OCI-LY7 (cell line): ENCODE measurements at regions of chr19 and their contacts with region 1.

Region 1: DNA sequence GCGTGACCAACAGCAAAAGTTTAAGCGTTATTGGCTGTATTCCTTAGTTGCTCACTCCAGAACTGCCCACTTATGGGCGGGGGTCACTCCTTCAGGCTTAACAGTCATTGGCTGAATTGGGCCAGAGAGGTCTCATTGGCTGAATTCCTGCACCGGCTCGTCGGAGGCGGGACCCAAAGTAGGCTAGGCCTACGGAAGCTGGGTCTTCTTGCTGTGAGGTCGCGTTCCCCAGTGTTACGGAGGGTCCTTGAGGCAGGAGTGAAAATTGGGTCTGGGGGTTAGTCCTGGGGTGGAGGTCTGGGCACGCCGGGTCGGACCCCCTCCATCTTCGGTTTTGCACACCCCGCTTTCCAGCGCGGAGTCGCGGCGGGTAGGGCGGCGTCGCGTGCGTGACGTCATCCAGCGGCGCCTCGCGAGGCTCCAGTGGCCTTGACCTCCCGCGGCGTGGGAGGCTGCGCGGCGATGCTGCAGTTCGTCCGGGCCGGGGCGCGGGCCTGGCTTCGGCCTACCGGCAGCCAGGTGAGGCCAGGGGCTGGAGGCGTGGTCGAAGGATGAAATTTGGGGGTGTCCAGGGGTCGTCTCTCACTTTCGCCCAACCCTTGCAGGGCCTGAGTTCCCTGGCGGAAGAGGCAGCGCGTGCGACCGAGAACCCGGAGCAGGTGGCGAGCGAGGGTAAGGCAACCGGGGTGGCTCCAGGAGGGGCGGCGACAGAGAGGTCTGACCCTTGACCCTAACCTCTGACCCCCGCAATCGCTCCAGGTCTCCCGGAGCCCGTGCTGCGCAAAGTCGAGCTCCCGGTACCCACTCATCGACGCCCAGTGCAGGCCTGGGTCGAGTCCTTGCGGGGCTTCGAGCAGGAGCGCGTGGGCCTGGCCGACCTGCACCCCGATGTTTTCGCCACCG is at the start of gene MRPL4:
- DNase-seq: peak; percentile 99
- H3K4me3 ChIP-seq: peak within 1 kb of the TSS; percentile 97
- H3K27ac ChIP-seq: peak within 1 kb of the TSS; percentile 54
- H3K4me1 ChIP-seq: peaks cover 48% of the 10 kb centered on the region
- CTCF ChIP-seq: no peak
- total RNA-seq, gene MRPL4: 134 and 148 TPM in 2 replicates

Region 2: DNA sequence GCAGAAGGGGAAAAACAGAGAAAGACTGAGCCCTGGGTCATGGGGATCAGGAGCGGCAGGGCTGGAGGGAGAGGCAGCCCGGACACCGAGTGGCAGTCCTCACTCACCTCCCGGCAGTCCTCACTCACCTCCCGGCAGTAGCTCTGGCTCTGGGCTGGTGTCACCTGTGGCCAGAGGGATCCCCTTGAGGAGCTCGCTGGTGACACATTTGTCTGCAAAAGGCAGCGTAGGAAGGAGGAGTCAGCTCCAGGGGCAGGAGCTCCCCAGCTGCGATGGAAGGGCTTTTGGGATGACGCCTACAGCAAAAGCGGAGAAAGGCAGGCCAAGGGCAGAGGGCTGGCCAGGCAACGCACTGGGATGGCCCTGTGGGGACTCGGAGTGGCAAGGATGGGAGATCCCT is 133.1 kb before region 1 on chr19:
- CTCF ChIA-PET with region 1: no interaction called
- POLR2A ChIA-PET with region 1: no interaction called
- intact Hi-C with region 1: loop called (anchors 1 kb)
- DNase-seq: no peak
- H3K4me3 ChIP-seq: peak overlapping the region; percentile 91
- H3K27ac ChIP-seq: peak overlapping the region; percentile 50
- H3K4me1 ChIP-seq: peaks cover 6% of the 10 kb centered on the region
- CTCF ChIP-seq: no peak

Region 3: GRCh38 chr19:10173257-10173926 is 78.7 kb before region 1 on chr19:
- CTCF ChIA-PET with region 1: no interaction called
- POLR2A ChIA-PET with region 1: interaction called, 3 read pairs
- intact Hi-C with region 1: loop called (anchors 2 kb)
- DNase-seq: no peak
- H3K4me3 ChIP-seq: no peak overlapping the region
- H3K27ac ChIP-seq: no peak overlapping the region
- H3K4me1 ChIP-seq: peaks cover 32% of the 10 kb centered on the region
- CTCF ChIP-seq: no peak

Region 4: DNA sequence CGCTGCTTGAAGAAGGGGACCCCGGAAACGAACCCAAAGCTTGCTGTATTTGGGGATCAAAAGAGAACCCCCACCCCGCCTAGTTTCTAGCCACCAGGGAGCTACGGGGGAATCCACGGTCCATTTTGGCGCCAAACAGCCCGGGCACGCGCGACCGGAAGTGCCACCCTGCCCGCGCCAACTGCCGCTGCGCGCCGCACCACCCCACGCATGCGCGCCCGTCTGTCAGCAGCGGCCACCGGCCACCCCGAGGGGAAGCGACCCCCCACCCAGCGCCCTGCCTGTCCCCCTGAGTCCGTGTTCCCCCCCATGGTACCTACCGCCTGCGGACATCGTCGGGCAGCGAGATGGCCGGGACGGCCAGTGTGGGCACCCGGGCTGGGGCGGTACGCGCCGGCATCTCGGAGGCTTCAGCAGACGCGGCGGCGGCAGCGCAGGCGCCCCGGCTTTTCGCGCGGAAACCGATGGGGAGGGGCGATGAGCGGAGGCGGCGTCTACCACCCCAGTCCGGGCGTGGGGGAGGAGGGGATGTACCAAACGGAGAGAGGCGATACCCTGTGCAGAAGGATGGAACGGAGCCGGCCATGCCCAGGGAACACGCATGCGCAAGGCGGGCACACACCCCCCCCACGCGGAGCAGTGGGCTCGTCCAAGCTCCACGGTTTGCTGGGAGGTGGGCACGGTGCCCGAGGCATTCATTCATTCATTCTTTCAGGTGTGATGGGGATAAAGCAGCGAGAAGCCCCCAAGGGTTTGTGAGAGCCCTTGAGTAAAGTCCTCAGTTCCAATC is 57.3 kb before region 1 on chr19 and contains the start of gene DNMT1:
- CTCF ChIA-PET with region 1: interaction called, 3 read pairs
- POLR2A ChIA-PET with region 1: interaction called, 3 read pairs
- intact Hi-C with region 1: loop called (anchors 2 kb)
- DNase-seq: peak; percentile 98
- H3K4me3 ChIP-seq: peak within 1 kb of the TSS; percentile 92
- H3K27ac ChIP-seq: peak within 1 kb of the TSS; percentile 78
- H3K4me1 ChIP-seq: peaks cover 80% of the 10 kb centered on the region
- CTCF ChIP-seq: no peak
- total RNA-seq, gene DNMT1: 329 and 365 TPM in 2 replicates

Region 5: GRCh38 chr19:10219678-10220077 is 32.4 kb before region 1 on chr19:
- CTCF ChIA-PET with region 1: interaction called, 4 read pairs
- POLR2A ChIA-PET with region 1: interaction called, 3 read pairs
- intact Hi-C with region 1: loop called (anchors 5 kb)
- DNase-seq: peak; percentile 84
- H3K4me3 ChIP-seq: peak overlapping the region; percentile 54
- H3K27ac ChIP-seq: peak overlapping the region; percentile 93
- H3K4me1 ChIP-seq: peaks cover 63% of the 10 kb centered on the region
- CTCF ChIP-seq: peak; percentile 83

Region 6: DNA sequence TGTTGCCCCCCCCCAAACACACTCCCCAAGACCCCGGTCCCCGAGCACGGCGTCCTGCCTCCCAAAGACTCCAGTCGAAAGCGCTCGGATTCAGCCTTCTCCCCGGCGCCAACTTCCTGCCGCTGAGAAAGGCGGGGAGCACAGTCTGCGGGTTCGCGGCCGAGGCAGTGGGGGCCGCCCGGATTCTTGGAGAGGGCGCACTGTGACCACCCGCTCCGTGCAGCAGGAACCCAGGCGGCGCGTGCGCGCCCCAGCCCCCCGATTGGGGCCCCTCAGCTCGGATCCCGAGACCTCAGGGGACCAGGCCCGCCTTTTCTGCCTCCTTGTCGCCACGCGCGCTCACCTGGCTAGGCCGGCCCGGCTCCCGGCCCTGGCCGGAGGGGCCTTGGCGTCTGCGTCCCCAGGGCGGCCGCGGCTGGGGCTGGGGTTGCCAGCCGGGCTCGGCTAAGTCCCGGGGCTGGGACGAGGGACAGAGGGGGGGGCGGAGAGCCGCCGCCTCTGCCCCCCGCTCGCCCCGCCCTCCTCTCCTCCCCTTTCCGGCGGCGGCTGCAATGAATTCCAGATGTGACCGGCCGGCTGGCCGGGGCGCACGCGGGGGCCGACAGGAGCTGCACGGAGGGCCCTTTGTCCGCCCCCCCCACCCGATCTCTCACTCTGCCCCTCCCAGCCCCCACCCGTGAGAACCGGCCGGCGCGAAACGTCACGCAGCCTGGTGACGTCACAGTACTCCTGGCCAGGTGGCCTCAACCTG is 21.0 kb before region 1 on chr19 and contains the start of gene S1PR2:
- CTCF ChIA-PET with region 1: interaction called, 6 read pairs
- POLR2A ChIA-PET with region 1: interaction called, 12 read pairs
- intact Hi-C with region 1: loop called (anchors 1 kb)
- DNase-seq: peak; percentile 89
- H3K4me3 ChIP-seq: peak within 1 kb of the TSS; percentile 95
- H3K27ac ChIP-seq: peak within 1 kb of the TSS; percentile 95
- H3K4me1 ChIP-seq: peaks cover 81% of the 10 kb centered on the region
- CTCF ChIP-seq: no peak
- total RNA-seq, gene S1PR2: 27.0 and 27.8 TPM in 2 replicates